ENCODE measurements at regions of chr5 and their contacts with region 1.

Region 1: DNA sequence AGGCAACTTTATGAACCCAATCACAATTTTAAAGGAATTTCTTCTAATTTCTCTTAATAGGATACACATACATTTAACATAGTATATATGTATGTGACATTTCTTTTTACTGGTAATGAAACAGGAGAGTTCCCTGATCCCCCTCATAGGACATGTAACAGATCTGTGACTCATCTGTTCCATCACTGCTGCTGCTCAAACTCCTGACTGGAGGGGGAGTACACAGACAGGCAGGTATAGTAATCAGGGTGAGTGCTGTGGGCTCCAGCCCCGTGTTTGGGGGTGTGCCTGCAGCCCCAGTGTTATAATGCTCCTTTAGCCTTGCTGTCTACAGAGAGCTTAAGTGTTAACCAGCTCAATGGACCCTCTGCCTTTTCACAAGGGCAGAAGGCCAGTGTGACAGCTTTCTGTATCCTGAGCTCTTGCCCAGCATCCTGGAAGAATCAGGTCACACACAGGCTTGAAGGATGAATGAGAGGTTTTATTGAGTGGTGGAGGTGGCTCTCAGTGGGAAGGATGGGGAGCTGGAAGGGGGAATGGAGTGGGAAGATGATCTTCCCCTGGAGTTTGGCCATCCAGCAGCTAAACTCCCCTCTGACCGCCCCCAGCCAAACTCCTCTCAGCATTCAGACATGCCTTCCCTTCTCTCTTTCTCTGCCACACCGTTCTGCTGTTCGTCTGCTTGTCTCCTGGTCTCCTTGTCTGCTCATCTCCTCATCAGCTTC is 161.3 kb downstream of the ZNF608 start:
- DNase-seq: no peak
- ATAC-seq: no peak
- H3K4me3 ChIP-seq: no peak overlapping the region
- H3K4me3 Mint-ChIP-seq: no peak overlapping the region
- H3K27ac ChIP-seq: no peak overlapping the region
- H3K27ac Mint-ChIP-seq: no peak overlapping the region
- H3K4me1 ChIP-seq: no peaks in the 10 kb centered on the region
- H3K4me1 Mint-ChIP-seq: peaks cover 5% of the 10 kb centered on the region
- H3K27me3 ChIP-seq: no peaks in the 10 kb centered on the region
- H3K27me3 Mint-ChIP-seq: peaks cover 5% of the 10 kb centered on the region
- CTCF ChIP-seq: no peak

Region 2: DNA sequence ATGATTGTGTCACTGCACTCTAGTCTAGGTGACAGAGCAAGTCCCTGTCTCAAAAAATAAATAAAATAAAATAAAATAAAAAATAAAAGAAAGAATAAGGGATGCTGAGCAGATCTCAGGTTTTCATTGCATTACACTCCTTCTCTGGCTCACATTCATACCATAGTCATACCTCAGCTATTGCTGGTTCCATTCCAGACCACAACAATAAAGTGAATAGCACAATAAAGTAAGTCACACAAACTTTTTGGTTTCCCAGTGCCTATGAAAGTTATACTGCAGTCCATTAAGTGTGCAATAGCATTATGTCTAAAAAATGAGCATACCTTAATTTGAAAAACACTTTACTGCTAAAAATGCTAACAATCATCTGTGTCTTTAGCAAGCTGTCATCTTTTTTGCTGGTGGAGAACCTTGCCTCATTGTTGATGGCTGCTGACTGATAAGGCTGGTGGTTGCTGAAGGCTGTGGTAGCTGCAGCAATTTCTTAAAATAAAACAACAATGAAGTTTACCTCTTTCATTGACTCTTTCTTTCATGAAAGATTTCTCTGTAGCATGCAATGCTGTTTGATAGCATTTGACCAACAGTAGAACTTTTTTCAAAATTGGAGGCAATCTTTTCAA is 254.4 kb before region 1 on chr5:
- CTCF ChIA-PET with region 1: no interaction called
- POLR2A ChIA-PET with region 1: no interaction called
- intact Hi-C with region 1: no loop called
- DNase-seq: no peak
- ATAC-seq: no peak
- H3K4me3 ChIP-seq: no peak overlapping the region
- H3K4me3 Mint-ChIP-seq: no peak overlapping the region
- H3K27ac ChIP-seq: no peak overlapping the region
- H3K27ac Mint-ChIP-seq: no peak overlapping the region
- H3K4me1 ChIP-seq: no peaks in the 10 kb centered on the region
- H3K4me1 Mint-ChIP-seq: no peaks in the 10 kb centered on the region
- H3K27me3 ChIP-seq: no peaks in the 10 kb centered on the region
- H3K27me3 Mint-ChIP-seq: no peaks in the 10 kb centered on the region
- CTCF ChIP-seq: no peak

Region 3: DNA sequence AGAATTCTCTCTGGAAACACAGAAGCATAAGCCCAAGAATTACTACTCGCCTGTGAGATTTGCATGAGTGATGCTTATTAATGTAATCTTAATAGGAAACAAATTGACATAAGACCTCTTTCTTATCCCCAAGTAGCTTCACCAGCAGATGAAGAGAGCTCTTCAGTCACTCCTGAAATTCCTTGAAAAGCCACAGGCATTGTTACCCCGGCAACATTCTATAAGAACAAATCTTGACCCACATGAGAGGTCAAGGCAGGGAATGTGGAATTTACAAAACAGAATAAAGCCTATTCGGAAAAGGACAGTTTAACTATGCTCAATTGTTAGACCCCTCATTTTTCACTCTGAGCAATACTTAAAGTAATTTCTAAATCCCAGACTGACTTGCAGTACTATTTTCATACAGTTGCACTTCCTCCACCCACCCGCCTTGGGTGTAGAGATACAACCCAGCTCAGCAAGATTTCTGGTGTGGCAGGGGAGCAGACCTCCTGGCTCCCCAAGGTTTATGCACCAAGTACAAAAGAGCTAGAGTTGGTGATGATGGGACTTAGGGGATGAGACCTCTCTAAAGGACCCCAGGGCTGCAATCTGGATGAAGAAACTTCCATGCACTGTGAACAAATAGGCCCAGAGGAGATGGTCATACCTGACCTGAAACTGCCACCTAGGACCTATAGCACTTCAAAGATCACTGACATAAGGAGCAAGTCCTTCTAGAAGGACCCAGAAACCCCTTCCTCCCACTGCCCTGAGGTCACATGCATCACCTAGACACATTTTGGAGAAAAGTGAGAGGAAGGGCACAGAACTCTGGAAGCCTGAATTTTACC is 80.9 kb before region 1 on chr5:
- CTCF ChIA-PET with region 1: no interaction called
- POLR2A ChIA-PET with region 1: no interaction called
- intact Hi-C with region 1: loop called in 1 of 2 experiments (anchors 5 kb)
- DNase-seq: no peak
- ATAC-seq: no peak
- H3K4me3 ChIP-seq: no peak overlapping the region
- H3K4me3 Mint-ChIP-seq: no peak overlapping the region
- H3K27ac ChIP-seq: no peak overlapping the region
- H3K27ac Mint-ChIP-seq: no peak overlapping the region
- H3K4me1 ChIP-seq: no peaks in the 10 kb centered on the region
- H3K4me1 Mint-ChIP-seq: no peaks in the 10 kb centered on the region
- H3K27me3 ChIP-seq: no peaks in the 10 kb centered on the region
- H3K27me3 Mint-ChIP-seq: no peaks in the 10 kb centered on the region
- CTCF ChIP-seq: no peak

Region 4: DNA sequence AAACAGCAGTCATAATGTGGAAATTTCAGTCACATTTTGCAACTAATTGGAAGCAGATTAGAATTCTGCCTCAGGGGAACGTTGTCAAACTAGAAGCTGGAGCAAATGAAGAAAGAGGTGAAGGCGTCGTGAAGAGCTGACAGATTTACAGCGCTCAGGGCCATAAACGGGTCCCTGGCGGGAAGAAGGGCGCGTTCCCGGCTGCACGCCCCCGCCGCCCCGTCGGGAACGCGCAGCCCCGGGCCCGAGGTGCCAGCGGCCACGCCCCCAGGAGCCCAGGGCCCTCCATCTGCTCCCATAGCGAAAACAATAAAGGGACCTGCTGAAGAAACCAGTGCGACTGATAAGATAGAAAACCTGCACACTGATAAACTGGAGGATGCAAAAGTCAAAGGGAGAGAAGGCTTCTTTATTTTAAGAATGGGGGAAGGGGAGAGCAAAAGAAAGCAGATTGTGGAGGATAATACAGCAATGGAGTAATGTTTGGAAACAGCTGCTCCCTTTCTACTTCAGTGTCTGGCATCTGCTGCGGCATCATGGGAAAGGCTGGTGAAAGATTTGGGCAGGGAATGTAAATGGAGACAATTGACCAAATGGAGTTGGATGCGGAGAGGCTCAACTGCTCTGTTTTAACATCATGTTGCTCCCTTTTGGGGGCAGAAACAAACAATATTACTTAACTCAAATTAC is 150.2 kb after region 1 on chr5:
- CTCF ChIA-PET with region 1: no interaction called
- POLR2A ChIA-PET with region 1: no interaction called
- intact Hi-C with region 1: no loop called
- DNase-seq: no peak
- ATAC-seq: no peak
- H3K4me3 ChIP-seq: no peak overlapping the region
- H3K4me3 Mint-ChIP-seq: no peak overlapping the region
- H3K27ac ChIP-seq: no peak overlapping the region
- H3K27ac Mint-ChIP-seq: no peak overlapping the region
- H3K4me1 ChIP-seq: no peaks in the 10 kb centered on the region
- H3K4me1 Mint-ChIP-seq: no peaks in the 10 kb centered on the region
- H3K27me3 ChIP-seq: no peaks in the 10 kb centered on the region
- H3K27me3 Mint-ChIP-seq: peaks cover 34% of the 10 kb centered on the region
- CTCF ChIP-seq: no peak

Measured in CD8-positive, alpha-beta T cell (primary cell).